ENCODE measurements at regions of chr5 and their contacts with region 1.

Region 1: GRCh38 chr5:36944607-36945225 is 68.1 kb downstream of the NIPBL start:
- DNase-seq: no peak
- ATAC-seq: no peak

Region 2: DNA sequence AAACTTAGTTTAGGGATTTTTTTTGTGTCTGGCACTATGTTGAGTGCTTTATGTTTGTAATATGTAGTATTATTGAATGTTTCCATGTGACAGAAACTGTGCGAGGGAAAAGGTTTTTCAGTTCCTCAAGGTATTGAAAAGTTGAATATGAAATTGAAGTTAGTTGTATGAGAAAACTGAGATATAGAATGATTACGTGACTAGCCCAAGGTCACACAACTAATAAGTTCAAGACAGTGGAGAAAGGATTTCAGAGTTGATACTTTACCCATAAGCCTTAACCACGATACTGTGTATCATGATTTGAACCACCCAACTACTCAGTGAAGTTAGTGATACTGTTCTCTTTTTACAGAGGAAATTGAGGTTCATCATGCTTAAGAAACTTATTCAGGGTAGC is 62.5 kb before region 1 on chr5:
- intact Hi-C with region 1: loop called (anchors 10 kb)
- DNase-seq: no peak
- ATAC-seq: no peak

Region 3: GRCh38 chr5:37437711-37438110 is 493.0 kb after region 1 on chr5:
- intact Hi-C with region 1: no loop called
- DNase-seq: no peak
- ATAC-seq: no peak